ENCODE measurements at regions of chr12 and their contacts with region 1.

Region 1: DNA sequence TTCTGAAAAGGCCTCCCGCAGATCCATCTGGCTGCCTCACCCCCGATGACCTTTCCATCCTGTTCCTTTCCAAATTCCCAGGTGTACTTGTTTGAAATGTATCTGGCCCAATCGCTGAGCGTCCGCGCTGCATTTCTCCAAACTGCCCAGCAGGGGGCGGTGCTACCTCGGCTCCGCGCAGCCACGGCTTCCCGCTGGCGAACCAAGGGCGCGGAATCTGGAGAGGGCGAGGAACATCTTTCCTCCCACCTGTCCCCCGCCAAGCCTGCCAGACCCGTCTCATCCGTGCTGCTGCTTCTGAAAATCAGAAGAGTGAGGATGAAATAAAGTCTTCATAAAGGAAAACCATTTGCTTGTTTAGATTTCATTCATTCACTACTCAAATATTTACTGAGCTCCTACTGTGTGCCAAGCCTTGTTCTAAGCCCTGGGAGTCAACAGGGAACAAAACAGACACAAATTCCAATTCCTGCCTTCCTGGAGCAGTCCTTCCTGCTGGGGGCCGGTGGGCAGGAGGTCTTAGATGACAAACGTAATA is 16.8 kb upstream of the MYL2 start:
- DNase-seq: peak; percentile 75
- ATAC-seq: peak; percentile 39
- H3K4me3 Mint-ChIP-seq: no peak overlapping the region
- H3K27ac Mint-ChIP-seq: no peak overlapping the region
- H3K4me1 Mint-ChIP-seq: peaks cover 5% of the 10 kb centered on the region
- H3K27me3 Mint-ChIP-seq: peaks cover 10% of the 10 kb centered on the region

Region 2: GRCh38 chr12:110885152-110885840 is 51.9 kb before region 1 on chr12:
- CTCF ChIA-PET with region 1: no interaction called
- POLR2A ChIA-PET with region 1: no interaction called
- intact Hi-C with region 1: no loop called
- DNase-seq: no peak
- ATAC-seq: no peak
- H3K4me3 Mint-ChIP-seq: no peak overlapping the region
- H3K27ac Mint-ChIP-seq: no peak overlapping the region
- H3K4me1 Mint-ChIP-seq: peaks cover 5% of the 10 kb centered on the region
- H3K27me3 Mint-ChIP-seq: no peaks in the 10 kb centered on the region

Region 3: GRCh38 chr12:110896559-110896958 is 40.6 kb before region 1 on chr12:
- CTCF ChIA-PET with region 1: interaction called, 6 read pairs
- POLR2A ChIA-PET with region 1: no interaction called
- intact Hi-C with region 1: loop called in 1 of 2 experiments (anchors 1 kb)
- DNase-seq: no peak
- ATAC-seq: no peak
- H3K4me3 Mint-ChIP-seq: no peak overlapping the region
- H3K27ac Mint-ChIP-seq: no peak overlapping the region
- H3K4me1 Mint-ChIP-seq: peaks cover 5% of the 10 kb centered on the region
- H3K27me3 Mint-ChIP-seq: peaks cover 13% of the 10 kb centered on the region

Region 4: DNA sequence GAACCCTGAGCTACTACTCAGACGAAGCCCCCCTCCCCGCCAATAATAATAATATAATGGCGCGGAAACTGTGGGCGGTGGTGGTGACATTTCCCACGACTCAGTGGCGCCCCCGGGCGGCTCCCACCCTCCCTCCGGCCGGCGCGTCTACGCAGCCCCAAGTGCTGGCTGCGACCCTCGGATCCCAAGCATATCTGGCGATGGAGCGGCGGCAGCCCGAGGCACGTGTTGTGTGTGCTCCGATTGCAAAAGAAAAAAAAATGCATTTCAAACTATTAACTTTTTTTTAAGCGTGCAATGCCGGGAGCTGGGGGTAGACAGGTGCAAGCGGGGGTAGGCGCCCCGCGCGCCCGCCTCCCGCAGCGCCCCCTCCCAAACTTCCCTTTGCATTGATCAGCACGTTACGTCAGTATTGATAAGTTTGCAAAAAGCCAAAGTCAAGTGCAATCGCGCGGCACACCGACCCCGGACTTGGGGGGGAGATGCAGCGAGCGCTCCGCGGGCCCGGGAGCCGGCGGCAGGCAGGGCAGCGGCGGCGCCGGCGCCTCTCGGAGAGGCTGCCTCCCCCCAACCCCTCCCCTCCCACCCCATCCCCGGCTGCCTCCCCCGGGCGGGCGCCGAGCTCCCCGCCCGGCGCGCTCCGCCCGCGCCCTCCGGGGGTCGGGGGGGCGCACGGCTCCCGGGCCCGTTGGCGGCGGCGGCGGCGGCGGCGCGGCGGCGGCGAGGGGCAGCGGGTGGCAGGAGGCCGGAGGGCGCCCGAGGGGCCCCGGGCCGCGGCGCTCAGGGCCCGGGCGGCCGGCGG is 96.3 kb after region 1 on chr12:
- CTCF ChIA-PET with region 1: no interaction called
- POLR2A ChIA-PET with region 1: no interaction called
- intact Hi-C with region 1: loop called in 1 of 2 experiments (anchors 10 kb)
- DNase-seq: peak; percentile 44
- ATAC-seq: no peak
- H3K4me3 Mint-ChIP-seq: peak overlapping the region; percentile 49
- H3K27ac Mint-ChIP-seq: no peak overlapping the region
- H3K4me1 Mint-ChIP-seq: peaks cover 19% of the 10 kb centered on the region
- H3K27me3 Mint-ChIP-seq: peaks cover 52% of the 10 kb centered on the region

Region 5: DNA sequence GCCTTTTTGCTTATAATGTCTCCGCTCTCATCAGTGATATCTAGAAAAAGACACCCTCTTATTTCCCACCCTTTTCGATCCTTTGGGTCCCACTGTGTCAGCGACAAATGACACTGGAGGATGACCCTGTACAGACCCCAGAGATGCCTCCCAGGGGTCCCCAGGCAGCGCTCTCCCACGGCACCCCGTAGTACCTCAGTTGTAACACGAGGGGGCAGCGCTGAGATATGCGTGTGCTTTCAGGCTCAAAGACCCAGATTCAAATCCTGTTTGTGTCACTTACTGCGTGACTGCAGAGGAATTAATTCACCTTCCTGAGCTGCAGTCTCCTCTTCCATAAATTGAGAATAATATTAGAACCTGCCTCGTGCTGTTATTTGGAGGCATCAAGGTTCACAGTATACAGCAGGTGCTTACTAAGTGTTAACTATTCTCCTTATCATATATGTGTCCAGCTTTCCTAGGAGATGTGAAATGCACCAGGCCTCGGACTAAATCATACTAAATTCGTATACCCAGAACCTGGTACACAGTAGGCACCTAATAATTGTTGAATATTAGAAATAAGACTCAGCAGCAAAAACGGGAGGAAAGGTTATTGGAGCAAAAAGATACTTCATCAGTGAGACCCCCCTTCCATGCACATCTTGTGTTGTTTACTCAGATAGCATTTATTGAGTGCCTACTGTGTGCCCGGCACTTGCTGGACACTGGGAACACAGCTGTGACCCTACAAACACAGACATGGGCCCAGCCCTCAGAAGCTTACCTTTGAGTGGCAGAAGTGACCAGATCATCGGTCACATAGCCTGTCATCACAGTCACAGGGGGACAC is 331.8 kb after region 1 on chr12:
- CTCF ChIA-PET with region 1: interaction called, 4 read pairs
- POLR2A ChIA-PET with region 1: no interaction called
- intact Hi-C with region 1: loop called in 1 of 2 experiments (anchors 1 kb)
- DNase-seq: peak; percentile 53
- ATAC-seq: no peak
- H3K4me3 Mint-ChIP-seq: no peak overlapping the region
- H3K27ac Mint-ChIP-seq: no peak overlapping the region
- H3K4me1 Mint-ChIP-seq: no peaks in the 10 kb centered on the region
- H3K27me3 Mint-ChIP-seq: peaks cover 3% of the 10 kb centered on the region

Region 6: DNA sequence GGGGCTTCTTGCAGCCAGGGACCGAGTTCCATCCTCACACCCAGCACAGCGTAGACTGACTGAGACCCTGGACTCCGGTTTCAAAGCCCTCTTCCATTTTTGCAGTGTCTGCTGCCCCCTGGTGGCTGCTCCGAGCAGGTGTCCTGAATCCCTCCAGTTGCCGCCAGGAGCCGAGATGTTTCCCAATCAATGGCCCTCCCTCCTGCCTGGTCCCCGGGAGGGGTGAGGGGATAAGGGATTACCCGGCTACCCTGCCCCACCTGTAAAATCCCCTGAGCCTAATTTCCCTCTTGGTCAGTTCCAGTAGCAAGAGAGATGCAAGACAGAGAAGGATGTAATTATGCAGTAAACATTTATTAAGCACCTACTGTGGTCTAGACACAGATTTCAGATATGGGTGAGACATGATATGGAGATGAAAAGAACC is 376.7 kb after region 1 on chr12:
- CTCF ChIA-PET with region 1: interaction called, 3 read pairs
- POLR2A ChIA-PET with region 1: no interaction called
- intact Hi-C with region 1: loop called (anchors 1 to 5 kb)
- DNase-seq: peak; percentile 85
- ATAC-seq: peak; percentile 77
- H3K4me3 Mint-ChIP-seq: no peak overlapping the region
- H3K27ac Mint-ChIP-seq: no peak overlapping the region
- H3K4me1 Mint-ChIP-seq: peaks cover 9% of the 10 kb centered on the region
- H3K27me3 Mint-ChIP-seq: peaks cover 4% of the 10 kb centered on the region

Measured in activated CD4-positive, alpha-beta T cell treated with anti-CD3 and anti-CD28 coated beads for 36 hours (primary cell).